ENCODE measurements at regions of chrX and their contacts with region 1.

Region 1: GRCh38 chrX:110847334-110847733 is 51.7 kb upstream of the CHRDL1 start:
- DNase-seq: peak; percentile 23
- ATAC-seq: peak; percentile 89
- H3K4me3 ChIP-seq: no peak overlapping the region
- H3K27ac ChIP-seq: no peak overlapping the region
- H3K4me1 ChIP-seq: no peaks in the 10 kb centered on the region
- H3K27me3 ChIP-seq: no peaks in the 10 kb centered on the region
- CTCF ChIP-seq: peak; percentile 46 to 66 (median 55); a peak in 5 of 6 replicates
- EP300 ChIP-seq: no peak
- POLR2A ChIP-seq: no peak
- RAD21 ChIP-seq: peak; percentile 71

Region 2: DNA sequence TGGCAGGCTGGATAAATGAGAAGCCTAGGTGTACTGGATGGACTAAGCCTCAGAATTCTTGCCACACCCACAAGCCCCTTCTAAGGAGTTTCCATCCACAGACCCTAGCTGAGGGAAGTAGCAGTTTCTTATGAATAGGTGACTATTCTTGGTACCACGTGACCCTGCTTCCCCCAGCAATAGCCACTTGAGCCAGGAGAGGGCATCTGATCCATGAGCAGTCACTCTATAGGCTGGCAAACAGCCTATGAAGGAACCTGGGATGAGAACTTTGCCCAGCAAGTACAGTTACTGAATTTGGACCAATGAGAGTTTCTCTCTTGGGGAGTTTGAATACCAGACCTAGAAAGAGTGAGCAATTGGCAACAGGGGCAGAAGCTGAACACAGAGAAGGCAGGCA is 404.7 kb before region 1 on chrX:
- CTCF ChIA-PET with region 1: interaction called, 73 read pairs
- POLR2A ChIA-PET with region 1: no interaction called
- RAD21 ChIA-PET with region 1: interaction called, 6 read pairs
- SMC1A ChIA-PET with region 1: interaction called, 7 read pairs
- in situ Hi-C with region 1: no loop called
- intact Hi-C with region 1: no loop called
- DNase-seq: no peak
- ATAC-seq: peak; percentile 93
- H3K4me3 ChIP-seq: no peak overlapping the region
- H3K27ac ChIP-seq: no peak overlapping the region
- H3K4me1 ChIP-seq: no peaks in the 10 kb centered on the region; the same call in 1 of the 2 replicates
- H3K27me3 ChIP-seq: peaks cover 0 to 4% of the 10 kb centered on the region in 2 experiments; a peak in 1 of 4 replicates
- CTCF ChIP-seq: peak; percentile 32 to 42 (median 32); a peak in 5 of 6 replicates
- EP300 ChIP-seq: no peak
- POLR2A ChIP-seq: no peak
- RAD21 ChIP-seq: no peak

Region 3: DNA sequence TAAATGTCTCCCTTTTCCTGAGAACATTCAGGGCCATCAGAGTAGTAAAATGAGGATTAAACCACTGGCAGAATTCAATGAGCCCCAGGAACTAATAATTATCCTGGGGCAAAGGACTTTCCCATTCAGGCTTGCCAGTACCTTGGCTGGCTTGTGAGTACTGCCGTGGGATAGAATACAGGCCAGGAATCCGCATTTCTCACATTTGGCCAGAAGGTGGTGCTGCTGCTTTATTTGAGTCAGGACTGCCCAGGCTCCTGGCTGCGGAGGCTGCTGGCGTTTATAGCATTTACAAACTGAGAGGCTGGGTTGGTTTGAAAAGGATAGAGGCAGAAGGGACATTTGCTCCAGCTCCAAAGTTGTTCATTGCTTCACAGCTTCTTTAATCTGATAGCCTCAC is 397.3 kb before region 1 on chrX:
- CTCF ChIA-PET with region 1: interaction called, 73 read pairs
- POLR2A ChIA-PET with region 1: no interaction called
- RAD21 ChIA-PET with region 1: interaction called, 19 read pairs
- SMC1A ChIA-PET with region 1: interaction called, 14 read pairs
- in situ Hi-C with region 1: loop called (anchors 5 kb)
- intact Hi-C with region 1: loop called (anchors 1 kb)
- DNase-seq: peak; percentile 20
- ATAC-seq: peak; percentile 99
- H3K4me3 ChIP-seq: no peak overlapping the region
- H3K27ac ChIP-seq: no peak overlapping the region
- H3K4me1 ChIP-seq: no peaks in the 10 kb centered on the region
- H3K27me3 ChIP-seq: peaks cover 0 to 4% of the 10 kb centered on the region in 2 experiments; a peak in 2 of 4 replicates
- CTCF ChIP-seq: peak; percentile 78 to 85 (median 84)
- EP300 ChIP-seq: no peak
- POLR2A ChIP-seq: no peak
- RAD21 ChIP-seq: peak; percentile 89

Region 4: GRCh38 chrX:110462957-110463356 is 384.4 kb before region 1 on chrX:
- CTCF ChIA-PET with region 1: interaction called, 10 read pairs
- POLR2A ChIA-PET with region 1: no interaction called
- RAD21 ChIA-PET with region 1: interaction called, 4 read pairs
- SMC1A ChIA-PET with region 1: interaction called, 4 read pairs
- in situ Hi-C with region 1: no loop called
- intact Hi-C with region 1: no loop called
- DNase-seq: no peak
- ATAC-seq: no peak; the same call in 2 of the 3 replicates
- H3K4me3 ChIP-seq: no peak overlapping the region
- H3K27ac ChIP-seq: no peak overlapping the region
- H3K4me1 ChIP-seq: no peaks in the 10 kb centered on the region
- H3K27me3 ChIP-seq: no peaks in the 10 kb centered on the region
- CTCF ChIP-seq: peak in 1 of 3 experiments; percentile 16; a peak in 1 of 6 replicates
- EP300 ChIP-seq: no peak
- POLR2A ChIP-seq: no peak
- RAD21 ChIP-seq: peak; percentile 44; the same call in 1 of the 2 replicates

Region 5: GRCh38 chrX:110588164-110588563 is 259.2 kb before region 1 on chrX:
- CTCF ChIA-PET with region 1: interaction called, 3 read pairs
- POLR2A ChIA-PET with region 1: no interaction called
- RAD21 ChIA-PET with region 1: interaction called, 4 read pairs
- SMC1A ChIA-PET with region 1: interaction called, 4 read pairs
- in situ Hi-C with region 1: no loop called
- intact Hi-C with region 1: loop called (anchors 10 kb)
- DNase-seq: no peak
- ATAC-seq: no peak
- H3K4me3 ChIP-seq: no peak overlapping the region
- H3K27ac ChIP-seq: no peak overlapping the region
- H3K4me1 ChIP-seq: no peaks in the 10 kb centered on the region
- H3K27me3 ChIP-seq: no peaks in the 10 kb centered on the region
- CTCF ChIP-seq: no peak
- EP300 ChIP-seq: no peak
- POLR2A ChIP-seq: no peak
- RAD21 ChIP-seq: no peak

Region 6: DNA sequence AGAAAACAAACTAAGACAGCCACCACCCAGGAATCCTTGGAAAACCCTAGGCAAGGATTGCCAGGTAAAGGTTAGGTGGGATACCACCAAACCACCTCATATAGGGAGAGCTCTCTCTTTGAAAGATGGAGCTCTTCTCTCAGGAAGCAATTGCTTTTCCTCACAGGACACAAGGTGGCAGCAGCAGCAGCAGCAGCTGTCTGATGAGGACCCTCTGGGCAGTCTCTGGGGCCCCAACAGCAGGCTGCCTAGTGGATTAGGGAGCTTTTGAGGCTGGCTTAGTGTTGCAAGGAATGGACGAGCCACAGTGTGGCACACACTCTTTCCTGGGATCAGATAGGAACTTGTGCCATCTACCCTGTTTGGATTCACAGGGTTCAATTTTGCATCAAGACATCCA is 10.4 kb before region 1 on chrX:
- CTCF ChIA-PET with region 1: interaction called, 34 read pairs
- POLR2A ChIA-PET with region 1: no interaction called
- RAD21 ChIA-PET with region 1: interaction called, 9 read pairs
- SMC1A ChIA-PET with region 1: interaction called, 10 read pairs
- in situ Hi-C with region 1: no loop called
- intact Hi-C with region 1: no loop called
- DNase-seq: no peak
- ATAC-seq: 0 out of 3 replicates have a peak, but pooled peaks have one; percentile 41
- H3K4me3 ChIP-seq: no peak overlapping the region
- H3K27ac ChIP-seq: no peak overlapping the region
- H3K4me1 ChIP-seq: no peaks in the 10 kb centered on the region
- H3K27me3 ChIP-seq: no peaks in the 10 kb centered on the region
- CTCF ChIP-seq: 0 out of 6 replicates have a peak, but pooled peaks of 2 of the 3 experiments have one; percentile 14 to 15
- EP300 ChIP-seq: no peak
- POLR2A ChIP-seq: no peak
- RAD21 ChIP-seq: no peak